Stomach (tissue), 19 donors: ENCODE measurements at regions of chr13 and their contacts with region 1.

Region 1: DNA sequence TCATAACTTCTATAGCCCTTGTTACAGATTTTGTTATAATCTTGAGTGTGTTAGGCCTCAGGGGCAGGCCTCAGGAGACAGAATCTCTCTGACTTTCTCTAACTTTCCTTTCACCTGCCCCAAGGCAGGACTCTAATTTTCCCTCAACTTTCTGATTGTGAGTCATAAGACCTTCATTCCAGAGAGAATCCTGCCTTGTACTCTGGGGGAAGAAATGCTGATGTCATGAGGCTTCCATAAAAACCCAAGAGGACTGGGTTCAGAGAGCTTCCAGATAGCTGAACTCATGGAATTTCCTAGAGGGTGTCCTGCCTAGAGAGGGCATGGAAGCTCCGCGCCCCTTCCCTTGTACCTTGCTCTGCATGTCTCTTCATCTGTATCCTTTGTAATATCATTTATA is 5.3 kb upstream of the KBTBD6 start:
- DNase-seq: no peak
- H3K4me3 ChIP-seq: no peak overlapping the region
- H3K27ac ChIP-seq: no peak overlapping the region
- H3K4me1 ChIP-seq: peaks cover 0 to 9% (median 8%) of the 10 kb centered on the region in 4 donors
- H3K27me3 ChIP-seq: no peaks in the 10 kb centered on the region
- CTCF ChIP-seq: no peak
- EP300 ChIP-seq: no peak
- POLR2A ChIP-seq: no peak

Region 2: DNA sequence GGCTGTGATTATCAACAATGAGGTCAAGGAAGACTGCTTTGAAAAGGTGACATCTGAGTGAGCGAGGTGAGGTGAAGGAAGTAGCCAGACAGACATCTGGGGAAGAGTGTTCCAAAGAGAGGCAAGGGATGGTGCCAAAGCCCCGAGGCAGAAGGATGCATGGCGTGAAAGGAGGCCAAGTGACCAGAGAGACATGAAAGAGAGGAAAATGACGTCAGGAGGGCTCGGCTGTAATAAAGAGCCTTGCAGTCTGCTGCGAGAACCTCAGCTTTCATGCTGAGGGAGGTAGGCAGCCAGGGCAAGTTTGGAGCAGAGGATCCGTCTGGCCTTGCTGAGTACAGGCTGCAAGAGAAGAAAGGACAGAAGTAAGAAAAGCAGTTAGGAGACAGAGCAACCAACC is 522.3 kb before region 1 on chr13:
- intact Hi-C with region 1: no loop called
- DNase-seq: no peak
- H3K4me3 ChIP-seq: no peak overlapping the region
- H3K27ac ChIP-seq: no peak overlapping the region
- H3K4me1 ChIP-seq: peaks cover 22 to 83% (median 54%) of the 10 kb centered on the region in 4 donors
- H3K27me3 ChIP-seq: no peaks in the 10 kb centered on the region
- CTCF ChIP-seq: no peak
- EP300 ChIP-seq: no peak
- POLR2A ChIP-seq: no peak

Region 3: DNA sequence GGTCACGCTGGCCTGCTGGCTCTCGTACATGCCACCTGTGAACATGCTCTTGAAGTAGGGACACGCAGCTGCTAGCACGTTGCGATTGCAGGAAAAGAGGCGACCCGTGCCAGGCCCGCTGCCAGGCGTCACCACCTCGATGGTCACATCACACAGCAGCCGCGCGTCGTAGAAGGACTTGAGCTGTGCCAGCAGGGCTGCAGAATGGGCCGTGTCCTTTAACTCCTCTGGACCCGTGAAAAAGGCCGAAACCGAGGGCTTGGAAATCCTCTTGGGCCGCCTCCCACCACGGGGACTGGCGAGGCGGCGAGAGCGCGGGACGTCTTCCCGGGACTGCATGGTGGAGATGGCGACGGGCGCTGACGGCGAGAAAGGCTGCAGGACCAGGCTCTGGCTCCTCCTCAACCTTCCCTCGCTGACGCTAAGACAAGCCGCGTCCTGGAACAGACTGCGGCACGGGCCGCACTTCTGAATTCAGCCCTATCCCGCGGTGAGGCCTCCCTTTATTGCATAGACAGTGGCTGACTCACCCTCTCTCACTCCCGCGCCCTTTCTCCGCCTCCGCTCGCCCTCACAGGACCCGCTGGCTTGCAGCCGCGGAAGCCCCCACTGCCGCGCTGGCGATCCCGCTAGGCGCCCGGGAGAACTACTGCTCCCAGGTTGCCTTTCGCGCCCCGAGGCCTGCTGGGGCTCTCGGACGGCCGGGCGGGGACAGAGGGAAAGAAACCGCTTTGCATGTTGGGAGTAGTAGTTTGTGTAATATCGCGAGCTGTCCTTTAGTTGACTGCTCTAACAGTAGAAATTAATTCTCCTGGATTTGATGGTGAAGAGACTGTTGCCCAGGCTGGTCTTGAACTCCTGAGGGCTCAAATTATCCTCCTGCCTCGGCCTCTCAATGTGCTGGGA is 56.2 kb after region 1 on chr13 and contains the start of gene KBTBD7:
- intact Hi-C with region 1: loop called (anchors 5 kb)
- DNase-seq: peak; percentile 92 to 98
- H3K4me3 ChIP-seq: peak within 1 kb of the TSS; percentile 70 to 79 (median 74)
- H3K27ac ChIP-seq: peak within 1 kb of the TSS; percentile 67 to 89 (median 85)
- H3K4me1 ChIP-seq: peaks cover 9 to 38% (median 25%) of the 10 kb centered on the region in 4 donors
- H3K27me3 ChIP-seq: no peaks in the 10 kb centered on the region
- CTCF ChIP-seq: peak in 1 of 7 experiments; percentile 34
- EP300 ChIP-seq: no peak
- POLR2A ChIP-seq: peak in 1 of 4 donors; percentile 28
- total RNA-seq, gene KBTBD7: 1.3 to 18.7 (median 9.8) TPM

Region 4: GRCh38 chr13:41206467-41206866 is 68.5 kb after region 1 on chr13:
- intact Hi-C with region 1: loop called (anchors 5 kb)
- DNase-seq: no peak
- H3K4me3 ChIP-seq: no peak overlapping the region
- H3K27ac ChIP-seq: no peak overlapping the region
- H3K4me1 ChIP-seq: no peaks in the 10 kb centered on the region
- H3K27me3 ChIP-seq: no peaks in the 10 kb centered on the region
- CTCF ChIP-seq: no peak
- EP300 ChIP-seq: no peak
- POLR2A ChIP-seq: no peak